CD4-positive, alpha-beta T cell (primary cell): ENCODE measurements at regions of chr12 and their contacts with region 1.

Region 1: GRCh38 chr12:53727310-53728041 is at the start of gene CALCOCO1:
- DNase-seq: peak; percentile 89 to 99 (median 96)
- ATAC-seq: peak; percentile 98
- H3K4me3 ChIP-seq: peak within 1 kb of the TSS; percentile 73
- H3K4me3 Mint-ChIP-seq: peak within 1 kb of the TSS; percentile 92
- H3K27ac ChIP-seq: peak within 1 kb of the TSS; percentile 42 to 52
- H3K27ac Mint-ChIP-seq: peak within 1 kb of the TSS; percentile 82
- H3K4me1 ChIP-seq: peaks cover 27% of the 10 kb centered on the region
- H3K4me1 Mint-ChIP-seq: peaks cover 34% of the 10 kb centered on the region
- H3K27me3 ChIP-seq: no peaks in the 10 kb centered on the region
- H3K27me3 Mint-ChIP-seq: no peaks in the 10 kb centered on the region
- CTCF ChIP-seq: no peak
- total RNA-seq, gene CALCOCO1: 66.8 to 69.3 TPM

Region 2: DNA sequence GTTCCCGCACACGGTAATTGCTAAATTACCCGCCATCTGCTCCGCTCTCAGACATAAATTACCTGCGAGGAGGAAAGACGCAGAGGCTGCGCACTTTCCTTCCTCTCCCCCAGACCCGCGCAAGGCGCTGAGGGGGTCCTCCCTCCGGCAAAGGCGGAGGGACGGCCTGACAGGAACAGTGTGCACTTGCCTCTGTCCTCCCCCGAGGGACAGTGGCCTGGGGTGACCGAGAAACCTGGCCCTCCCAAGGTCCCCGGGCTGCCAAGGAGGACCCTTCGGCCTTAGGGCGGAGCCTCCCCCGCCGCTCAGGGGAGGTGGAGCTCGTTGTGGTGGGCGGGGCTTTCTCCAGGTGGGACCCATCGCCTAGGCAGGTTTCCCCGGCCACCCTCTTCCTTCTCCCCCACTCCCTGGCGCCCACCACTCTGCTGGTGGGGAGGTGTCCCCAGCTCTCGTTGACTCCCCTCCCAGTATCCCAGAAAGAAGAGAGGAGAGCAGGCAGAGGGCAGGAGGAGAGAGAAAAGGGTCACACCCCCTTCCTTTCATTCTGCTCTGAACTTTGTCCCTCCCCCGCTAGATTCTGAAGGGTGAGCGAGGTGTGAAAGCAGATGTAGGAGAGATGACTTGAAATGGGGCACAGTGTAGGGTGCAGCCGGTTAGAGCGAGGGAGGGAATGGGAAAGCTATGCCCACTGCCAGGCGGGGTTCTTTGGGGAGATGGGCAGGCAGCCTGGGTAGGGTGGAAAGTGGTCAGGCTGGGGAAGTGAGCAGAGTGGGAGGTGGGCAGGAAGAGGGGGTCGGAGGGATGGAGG is 11.1 kb after region 1 on chr12:
- CTCF ChIA-PET with region 1: interaction called, 57 read pairs
- POLR2A ChIA-PET with region 1: interaction called, 19 read pairs
- intact Hi-C with region 1: loop called in 1 of 2 experiments (anchors 2 kb)
- DNase-seq: peak in 13 of 14 experiments; percentile 27 to 75 (median 48)
- ATAC-seq: peak; percentile 71
- H3K4me3 ChIP-seq: peak overlapping the region; percentile 56
- H3K4me3 Mint-ChIP-seq: peak overlapping the region; percentile 77
- H3K27ac ChIP-seq: no peak overlapping the region
- H3K27ac Mint-ChIP-seq: no peak overlapping the region
- H3K4me1 ChIP-seq: peaks cover 40% of the 10 kb centered on the region
- H3K4me1 Mint-ChIP-seq: peaks cover 22% of the 10 kb centered on the region
- H3K27me3 ChIP-seq: peaks cover 44 to 52% of the 10 kb centered on the region in 2 experiments
- H3K27me3 Mint-ChIP-seq: peaks cover 38% of the 10 kb centered on the region
- CTCF ChIP-seq: no peak

Region 3: GRCh38 chr12:53757095-53757770 is 29.8 kb after region 1 on chr12:
- CTCF ChIA-PET with region 1: interaction called, 10 read pairs
- POLR2A ChIA-PET with region 1: interaction called, 5 read pairs
- intact Hi-C with region 1: no loop called
- DNase-seq: peak; percentile 63 to 87 (median 74)
- ATAC-seq: peak; percentile 95
- H3K4me3 ChIP-seq: no peak overlapping the region
- H3K4me3 Mint-ChIP-seq: peak overlapping the region; percentile 13
- H3K27ac ChIP-seq: no peak overlapping the region
- H3K27ac Mint-ChIP-seq: no peak overlapping the region
- H3K4me1 ChIP-seq: peaks cover 14% of the 10 kb centered on the region
- H3K4me1 Mint-ChIP-seq: peaks cover 23% of the 10 kb centered on the region
- H3K27me3 ChIP-seq: peaks cover 50 to 52% of the 10 kb centered on the region in 2 experiments
- H3K27me3 Mint-ChIP-seq: peaks cover 46% of the 10 kb centered on the region
- CTCF ChIP-seq: peak; percentile 91